ENCODE measurements at regions of chr12 and their contacts with region 1.

Region 1: DNA sequence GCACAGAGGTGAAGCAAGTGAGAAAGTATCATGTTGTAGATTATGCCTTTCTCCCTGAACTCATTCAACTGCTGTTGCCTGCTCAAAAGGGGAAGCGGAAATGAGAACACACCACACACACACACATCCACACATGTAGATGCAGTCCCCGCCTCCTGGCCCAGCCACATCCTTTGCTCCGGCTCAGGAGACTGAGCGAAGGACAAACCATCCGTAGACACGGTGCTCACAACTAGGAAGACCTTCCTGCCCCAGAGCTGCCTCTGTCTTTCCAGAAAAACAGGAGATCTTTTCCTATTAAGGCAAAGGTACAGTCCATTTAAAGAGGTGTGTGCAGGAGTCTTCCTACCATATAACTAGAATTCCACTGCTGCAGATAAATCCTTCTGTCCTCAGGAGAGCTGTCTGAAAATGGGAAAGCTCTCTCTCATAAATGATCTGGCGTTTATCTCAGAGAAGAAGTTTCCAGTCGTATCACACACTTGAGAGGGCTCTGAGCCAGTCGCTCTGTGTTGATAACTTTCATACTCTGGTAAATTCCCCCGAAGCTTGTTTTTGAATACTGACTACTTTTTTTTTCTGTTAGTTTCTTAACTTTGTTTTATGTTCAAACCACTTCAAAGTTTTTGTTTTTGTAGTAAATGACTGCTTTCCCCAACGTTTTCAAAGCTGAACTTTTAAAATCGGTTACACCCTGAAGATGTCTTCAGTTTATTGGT is at the start of gene TESPA1:
- DNase-seq: peak; percentile 82
- H3K4me3 Mint-ChIP-seq: peak within 1 kb of the TSS; percentile 90
- H3K27ac Mint-ChIP-seq: peak within 1 kb of the TSS; percentile 90
- H3K4me1 Mint-ChIP-seq: peaks cover 79% of the 10 kb centered on the region
- H3K27me3 Mint-ChIP-seq: no peaks in the 10 kb centered on the region
- total RNA-seq, gene TESPA1: 179 and 181 TPM in 2 replicates

Region 2: GRCh38 chr12:54526812-54527630 is 457.8 kb before region 1 on chr12:
- intact Hi-C with region 1: loop called (anchors 10 kb)
- DNase-seq: no peak
- H3K4me3 Mint-ChIP-seq: no peak overlapping the region
- H3K27ac Mint-ChIP-seq: no peak overlapping the region
- H3K4me1 Mint-ChIP-seq: peaks cover 10% of the 10 kb centered on the region
- H3K27me3 Mint-ChIP-seq: no peaks in the 10 kb centered on the region

Region 3: GRCh38 chr12:54560374-54560858 is 424.4 kb before region 1 on chr12:
- intact Hi-C with region 1: loop called (anchors 2 kb)
- DNase-seq: peak; percentile 86
- H3K4me3 Mint-ChIP-seq: peak overlapping the region; percentile 78
- H3K27ac Mint-ChIP-seq: peak overlapping the region; percentile 91
- H3K4me1 Mint-ChIP-seq: peaks cover 47% of the 10 kb centered on the region
- H3K27me3 Mint-ChIP-seq: no peaks in the 10 kb centered on the region

Region 4: GRCh38 chr12:54935235-54935951 is 49.4 kb before region 1 on chr12:
- intact Hi-C with region 1: loop called (anchors 1 kb)
- DNase-seq: peak; percentile 41
- H3K4me3 Mint-ChIP-seq: peak overlapping the region; percentile 62
- H3K27ac Mint-ChIP-seq: peak overlapping the region; percentile 99
- H3K4me1 Mint-ChIP-seq: peaks cover 42% of the 10 kb centered on the region
- H3K27me3 Mint-ChIP-seq: no peaks in the 10 kb centered on the region